Activated T-helper 2 cell treated with anti-CD3 and anti-CD28 coated beads, Interferon-gamma antibody, Interleukin-2, Interleukin-4, amounts not matched to agents 10 μg/mL and 5 μg/mL and 100 μg/mL, durations not matched to agents 14 hours and 24 hours and 36 hours (primary cell): ENCODE measurements at regions of chr1 and their contacts with region 1.

Region 1: GRCh38 chr1:174159252-174160108 is at the start of gene RABGAP1L:
- DNase-seq: peak; percentile 91
- H3K4me3 Mint-ChIP-seq: peak within 1 kb of the TSS; percentile 99
- H3K27ac Mint-ChIP-seq: peak within 1 kb of the TSS; percentile 96
- H3K4me1 Mint-ChIP-seq: peaks cover 53% of the 10 kb centered on the region
- H3K27me3 Mint-ChIP-seq: no peaks in the 10 kb centered on the region
- total RNA-seq, gene RABGAP1L: 28.8 and 31.5 TPM in 2 replicates

Region 2: DNA sequence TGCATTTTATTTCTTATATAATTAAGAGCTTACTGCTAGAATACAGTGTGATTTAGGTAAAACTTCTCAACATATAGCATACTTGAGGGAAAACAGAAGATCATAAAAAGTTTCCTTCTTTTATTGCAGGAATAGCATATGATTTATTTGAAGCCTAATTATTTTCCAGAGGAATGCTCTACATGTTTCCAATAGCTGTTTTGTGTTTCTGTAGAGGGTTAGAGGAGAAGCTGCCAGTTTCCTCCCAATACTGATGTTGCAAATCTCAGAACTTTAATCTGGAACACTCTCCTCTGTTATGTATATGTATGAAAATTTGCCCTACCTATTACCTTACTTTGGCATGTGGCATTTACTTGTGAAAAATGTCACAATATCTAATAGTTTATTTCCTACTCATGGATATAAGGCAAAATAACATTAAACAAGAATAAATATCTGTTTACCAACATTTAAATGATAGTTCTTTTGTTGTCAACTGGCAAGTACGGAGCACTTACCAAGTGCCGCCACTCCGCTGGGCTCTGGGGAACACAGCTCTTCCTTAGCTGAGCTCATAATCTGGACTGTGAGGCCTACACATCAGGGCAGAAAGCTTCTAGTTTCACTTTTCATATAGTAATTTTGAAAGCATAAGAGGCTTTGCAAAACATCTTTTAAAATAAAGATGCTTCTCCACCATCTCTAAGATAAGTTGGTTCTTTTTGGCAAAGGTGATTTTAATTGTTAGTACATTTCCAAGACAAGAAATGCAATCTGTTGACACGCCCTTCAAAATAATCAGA is 1978.8 kb before region 1 on chr1:
- intact Hi-C with region 1: loop called (anchors 5 kb)
- DNase-seq: peak; percentile 40
- H3K4me3 Mint-ChIP-seq: peak overlapping the region; percentile 77
- H3K27ac Mint-ChIP-seq: peak overlapping the region; percentile 97
- H3K4me1 Mint-ChIP-seq: peaks cover 42% of the 10 kb centered on the region
- H3K27me3 Mint-ChIP-seq: no peaks in the 10 kb centered on the region

Region 3: GRCh38 chr1:173297798-173298391 is 861.6 kb before region 1 on chr1:
- intact Hi-C with region 1: loop called (anchors 10 kb)
- DNase-seq: no peak
- H3K4me3 Mint-ChIP-seq: no peak overlapping the region
- H3K27ac Mint-ChIP-seq: peak overlapping the region; percentile 2
- H3K4me1 Mint-ChIP-seq: peaks cover 28% of the 10 kb centered on the region
- H3K27me3 Mint-ChIP-seq: peaks cover 37% of the 10 kb centered on the region

Region 4: DNA sequence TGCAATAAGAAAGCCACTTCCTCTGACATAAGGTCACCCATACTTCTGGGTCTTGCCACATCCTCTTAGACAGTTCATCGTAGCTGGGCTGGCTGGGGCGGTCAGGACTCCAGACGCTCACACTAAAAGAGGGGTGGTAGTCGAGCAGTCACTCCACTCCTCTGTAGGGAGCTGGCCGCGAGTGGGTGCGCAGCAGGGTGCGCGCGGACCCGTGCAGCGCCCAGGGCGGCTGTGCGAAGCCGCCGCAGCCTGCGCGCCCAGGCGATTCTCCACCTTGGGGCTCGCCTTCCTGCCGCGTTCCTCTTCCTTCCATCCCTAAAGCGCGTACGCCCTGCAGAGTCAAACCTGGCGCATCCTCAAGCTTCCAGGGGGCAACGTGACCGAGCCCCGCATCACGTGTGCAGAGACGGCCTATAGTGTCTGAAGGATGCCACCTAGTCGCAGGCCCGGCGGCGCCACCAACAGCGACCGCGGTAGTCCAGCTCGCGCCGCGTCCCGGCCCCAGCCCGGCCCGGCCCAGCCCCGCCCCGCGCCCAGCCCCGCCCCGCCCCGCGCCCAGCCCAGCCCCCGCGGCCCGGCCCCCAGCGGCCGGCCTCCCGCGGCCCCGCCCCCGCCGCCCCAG is 682.7 kb before region 1 on chr1:
- intact Hi-C with region 1: loop called (anchors 2 kb)
- DNase-seq: peak; percentile 74
- H3K4me3 Mint-ChIP-seq: peak overlapping the region; percentile 92
- H3K27ac Mint-ChIP-seq: peak overlapping the region; percentile 94
- H3K4me1 Mint-ChIP-seq: peaks cover 53% of the 10 kb centered on the region
- H3K27me3 Mint-ChIP-seq: no peaks in the 10 kb centered on the region

Region 5: DNA sequence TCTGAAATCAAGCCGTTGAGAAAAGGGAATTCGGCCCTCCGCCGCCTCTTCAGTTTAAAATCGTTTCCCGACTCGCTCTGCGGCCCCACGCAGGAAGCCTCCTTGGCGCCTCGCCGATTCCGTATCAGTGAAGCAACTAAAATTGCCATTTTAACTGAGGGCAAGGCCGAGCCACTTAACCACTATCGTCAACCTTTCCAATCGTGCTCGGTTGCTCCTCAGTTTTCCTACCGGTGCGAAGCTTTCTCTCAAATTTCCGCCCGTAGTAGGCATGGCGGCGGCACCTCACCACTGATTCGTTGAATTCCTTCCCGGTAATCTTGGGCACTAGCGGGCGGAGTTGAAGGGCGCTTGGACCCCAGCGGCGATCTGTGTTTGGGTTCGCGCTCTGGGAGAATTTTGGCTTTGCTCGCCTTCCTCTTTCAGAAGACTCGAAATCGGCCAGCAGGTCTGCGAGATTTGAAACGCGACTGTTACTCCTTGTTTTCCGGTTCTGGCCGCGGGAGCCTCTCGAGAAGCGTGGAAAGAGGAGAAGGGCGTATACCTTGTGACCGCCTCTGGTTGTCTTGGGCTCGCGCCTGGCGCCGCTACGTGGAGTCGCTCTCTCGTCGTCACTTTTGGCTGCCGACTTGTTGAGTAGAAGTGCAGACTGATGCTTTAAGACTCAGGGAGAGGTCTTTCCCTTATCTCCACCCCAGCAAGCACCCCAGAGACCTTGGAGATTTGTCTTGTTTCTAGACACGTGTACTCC is 335.0 kb before region 1 on chr1 and contains the starts of genes CENPL and DARS2:
- intact Hi-C with region 1: loop called (anchors 2 kb)
- DNase-seq: peak; percentile 91
- H3K4me3 Mint-ChIP-seq: peak within 1 kb of the TSS; percentile 98
- H3K27ac Mint-ChIP-seq: peak within 1 kb of the TSS; percentile 99
- H3K4me1 Mint-ChIP-seq: peaks cover 36% of the 10 kb centered on the region
- H3K27me3 Mint-ChIP-seq: no peaks in the 10 kb centered on the region
- total RNA-seq, gene CENPL: 26.1 and 26.2 TPM in 2 replicates
- total RNA-seq, gene DARS2: 49.7 and 49.9 TPM in 2 replicates

Region 6: GRCh38 chr1:174022080-174022975 is 137.2 kb before region 1 on chr1 and contains the start of gene RC3H1:
- intact Hi-C with region 1: loop called (anchors 1 kb)
- DNase-seq: peak; percentile 85
- H3K4me3 Mint-ChIP-seq: peak within 1 kb of the TSS; percentile 99
- H3K27ac Mint-ChIP-seq: peak within 1 kb of the TSS; percentile 90
- H3K4me1 Mint-ChIP-seq: peaks cover 35% of the 10 kb centered on the region
- H3K27me3 Mint-ChIP-seq: peaks cover 2% of the 10 kb centered on the region
- total RNA-seq, gene RC3H1: 30.4 and 33.5 TPM in 2 replicates

Region 7: GRCh38 chr1:174999216-174999925 is 839.9 kb after region 1 on chr1:
- intact Hi-C with region 1: loop called (anchors 2 kb)
- DNase-seq: peak; percentile 96
- H3K4me3 Mint-ChIP-seq: no peak overlapping the region
- H3K27ac Mint-ChIP-seq: no peak overlapping the region
- H3K4me1 Mint-ChIP-seq: peaks cover 38% of the 10 kb centered on the region
- H3K27me3 Mint-ChIP-seq: no peaks in the 10 kb centered on the region